GM10248 (cell line): ENCODE measurements at regions of chr15 and their contacts with region 1.

Region 1: DNA sequence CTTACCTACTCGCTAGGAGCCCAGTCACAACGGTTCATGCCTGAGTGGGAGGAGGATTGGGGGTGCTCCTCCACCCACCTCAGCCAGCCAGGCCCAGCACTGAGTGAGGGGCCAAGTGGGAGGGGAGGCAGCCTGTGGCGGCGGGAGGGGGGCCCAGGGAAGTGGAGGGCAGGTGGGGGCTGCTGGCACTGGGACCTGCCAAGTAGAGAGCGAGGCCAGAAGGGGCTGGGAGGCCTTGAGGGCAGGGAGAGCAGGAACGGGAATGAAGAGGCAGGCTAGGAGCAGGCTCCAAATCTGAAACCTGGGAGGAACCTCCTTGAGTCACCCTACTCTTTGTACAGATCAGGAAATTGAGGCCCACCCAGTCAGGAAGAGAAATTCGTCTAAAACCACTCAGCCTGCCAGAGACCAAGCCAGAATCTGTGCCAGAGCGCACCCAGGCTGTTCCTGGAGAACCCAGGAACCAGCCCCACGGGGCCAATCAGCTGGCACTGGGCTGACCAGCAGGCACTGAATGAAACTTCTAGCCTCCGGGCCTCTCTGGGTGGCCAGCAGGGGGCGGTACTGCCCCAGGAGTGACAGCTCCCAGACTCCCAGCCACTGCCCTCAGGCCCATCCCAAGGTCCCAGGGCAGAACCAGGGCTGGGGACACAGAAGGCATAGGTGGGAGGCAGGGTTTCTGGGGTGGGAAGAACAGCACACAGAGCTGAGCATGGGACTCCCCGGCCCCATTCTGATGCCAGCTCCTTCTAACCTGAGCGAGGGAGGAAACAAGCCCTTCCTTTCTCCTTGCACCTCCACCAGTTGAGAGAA is 14.8 kb upstream of the CYP11A1 start:
- DNase-seq: peak; percentile 78
- CTCF ChIP-seq: peak; percentile 94

Region 2: DNA sequence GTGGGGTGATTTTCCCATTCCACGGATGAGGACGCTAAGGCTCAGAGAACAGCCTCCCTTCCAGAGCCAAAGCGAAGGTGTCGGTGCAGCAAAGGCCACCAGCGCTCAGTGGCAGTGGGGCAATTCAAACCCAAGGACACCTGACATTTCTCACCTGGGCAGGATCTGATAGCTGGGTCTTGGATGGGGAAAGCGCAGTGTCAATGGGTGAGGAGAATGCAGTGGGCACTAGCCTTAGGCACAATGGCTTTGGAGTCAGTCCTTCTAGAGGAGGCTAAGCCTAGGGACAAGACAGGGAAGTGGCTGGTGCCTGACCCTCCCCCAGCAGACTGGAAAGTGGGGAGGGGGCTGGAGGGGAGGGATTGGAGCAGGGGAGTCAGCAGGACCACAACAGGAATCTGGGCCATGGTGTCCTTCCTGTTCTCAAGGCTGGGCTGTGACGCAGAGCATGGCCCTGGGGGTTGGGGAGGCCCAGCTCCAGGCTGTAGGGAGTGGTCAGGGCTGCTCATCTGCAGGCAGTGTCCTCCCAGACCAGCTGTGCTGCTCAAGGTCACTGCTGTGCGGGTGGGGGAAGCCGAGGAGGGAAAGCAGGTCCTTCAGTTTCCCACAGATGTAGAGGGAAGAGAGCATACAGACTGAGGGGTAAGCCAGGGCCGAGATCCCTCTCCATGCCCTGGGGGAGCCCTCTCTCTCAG is 55.6 kb before region 1 on chr15:
- CTCF ChIA-PET with region 1: no interaction called
- POLR2A ChIA-PET with region 1: no interaction called
- DNase-seq: no peak
- CTCF ChIP-seq: no peak

Region 3: GRCh38 chr15:74396445-74397238 is 14.4 kb after region 1 on chr15:
- CTCF ChIA-PET with region 1: interaction called, 160 read pairs
- POLR2A ChIA-PET with region 1: interaction called, 19 read pairs
- DNase-seq: peak; percentile 84
- CTCF ChIP-seq: peak; percentile 25

Region 4: DNA sequence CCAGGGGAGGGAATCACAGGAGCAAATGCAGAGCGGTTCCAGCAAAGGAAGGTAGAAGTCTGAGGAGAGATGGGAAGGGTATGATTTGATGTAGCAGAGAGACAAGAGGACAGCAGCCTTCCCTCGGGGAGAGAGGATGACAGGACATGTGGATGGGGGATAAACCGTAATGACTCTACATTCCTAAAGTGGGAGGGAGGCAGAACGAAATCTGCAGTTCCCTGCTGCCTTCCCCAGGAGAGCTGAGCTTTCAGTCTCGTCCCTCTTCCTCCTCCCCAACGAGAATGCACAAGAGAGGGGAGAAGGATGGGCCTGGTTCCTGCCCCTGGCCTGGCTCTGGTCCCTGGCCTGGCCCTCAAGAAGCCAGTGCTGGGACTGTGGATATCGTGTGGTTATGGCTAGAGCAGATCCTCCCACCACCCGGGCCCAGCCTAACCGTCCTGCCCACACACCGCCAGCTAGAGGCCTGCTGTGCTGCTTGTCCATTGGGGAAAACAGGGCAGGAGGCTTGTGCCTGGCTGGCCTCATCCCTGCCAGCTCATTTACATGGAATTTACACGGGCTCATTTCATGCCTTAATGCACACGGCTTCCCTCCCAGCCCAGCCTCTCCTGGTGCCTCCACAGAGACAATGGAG is 25.0 kb after region 1 on chr15:
- CTCF ChIA-PET with region 1: interaction called, 160 read pairs
- POLR2A ChIA-PET with region 1: interaction called, 19 read pairs
- DNase-seq: no peak
- CTCF ChIP-seq: no peak

Region 5: DNA sequence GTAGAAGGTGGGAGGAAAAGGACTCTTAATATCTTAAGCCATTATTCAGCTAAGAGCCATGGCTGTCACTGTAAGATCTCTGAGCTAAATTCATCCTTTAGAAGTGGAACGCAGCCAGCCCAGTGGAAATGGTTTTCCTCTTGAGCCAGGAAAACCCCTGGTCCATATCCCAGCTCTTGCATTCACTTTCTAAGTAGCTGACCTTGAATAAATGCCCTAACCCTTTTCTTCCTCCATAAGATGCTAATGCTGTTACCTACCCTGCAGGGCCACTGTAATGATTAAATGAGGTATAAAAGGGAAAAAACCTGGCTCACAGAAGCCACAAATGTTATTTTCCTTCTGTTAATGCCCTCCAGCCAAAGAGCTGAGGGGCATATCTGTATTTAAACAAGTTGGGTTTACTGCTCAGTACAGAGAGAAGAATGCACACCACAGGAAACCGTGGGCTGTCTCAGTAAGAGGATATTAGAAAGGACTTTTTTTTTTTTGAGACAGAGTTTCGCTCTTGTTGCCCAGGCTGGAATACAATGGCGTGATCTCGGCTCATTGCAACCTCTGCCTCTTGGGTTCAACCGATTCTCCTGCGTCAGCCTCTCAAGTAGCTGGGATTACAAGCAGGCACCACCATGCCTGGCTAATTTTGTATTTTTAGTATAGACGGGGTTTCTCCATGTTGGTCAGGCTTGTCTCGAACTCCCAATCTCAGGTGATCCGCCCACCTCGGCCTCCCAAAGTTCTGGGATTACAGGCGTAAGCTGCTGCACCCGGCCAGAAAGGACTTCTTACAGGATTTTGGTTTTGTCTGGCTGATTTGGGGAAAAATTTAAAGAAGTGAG is 71.9 kb after region 1 on chr15:
- CTCF ChIA-PET with region 1: interaction called, 827 read pairs
- POLR2A ChIA-PET with region 1: no interaction called
- DNase-seq: no peak
- CTCF ChIP-seq: no peak

Region 6: GRCh38 chr15:74460871-74461846 is 78.9 kb after region 1 on chr15 and contains the start of gene UBL7:
- CTCF ChIA-PET with region 1: interaction called, 17 read pairs
- POLR2A ChIA-PET with region 1: no interaction called
- DNase-seq: peak; percentile 96
- CTCF ChIP-seq: peak; percentile 47

Region 7: GRCh38 chr15:74489518-74490338 is 107.5 kb after region 1 on chr15:
- CTCF ChIA-PET with region 1: interaction called, 77 read pairs
- POLR2A ChIA-PET with region 1: no interaction called
- DNase-seq: peak; percentile 81
- CTCF ChIP-seq: peak; percentile 69